ENCODE measurements at regions of chr11 and their contacts with region 1.

Region 1: GRCh38 chr11:81707881-81708280 is 1025.8 kb downstream of the FAM181B start:
- DNase-seq: no peak
- H3K4me3 ChIP-seq: no peak overlapping the region
- H3K27ac ChIP-seq: no peak overlapping the region
- H3K4me1 ChIP-seq: no peaks in the 10 kb centered on the region
- H3K27me3 ChIP-seq: no peaks in the 10 kb centered on the region
- CTCF ChIP-seq: peak; percentile 46 to 76 (median 69)
- EP300 ChIP-seq: no peak
- POLR2A ChIP-seq: no peak
- RAD21 ChIP-seq: peak; percentile 78 to 79

Region 2: DNA sequence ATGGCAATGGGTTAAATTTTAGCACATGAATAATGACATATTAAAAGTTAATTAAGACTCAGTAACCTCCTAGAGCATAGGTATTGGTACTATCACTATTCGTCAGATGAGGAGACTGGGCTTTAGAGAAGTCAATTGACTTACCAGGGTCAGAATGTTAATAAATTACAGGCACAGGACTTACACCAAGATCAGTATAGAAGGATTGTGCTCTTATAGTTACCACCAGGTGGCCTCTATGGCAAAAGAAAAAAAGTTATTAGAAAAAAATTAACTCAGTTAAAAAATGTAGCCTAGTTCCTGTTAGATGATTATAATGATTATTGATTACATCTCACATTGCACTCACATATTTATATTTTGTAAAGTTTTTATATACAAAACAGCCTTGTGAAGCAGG is 137.9 kb before region 1 on chr11:
- CTCF ChIA-PET with region 1: no interaction called
- POLR2A ChIA-PET with region 1: no interaction called
- DNase-seq: no peak
- H3K4me3 ChIP-seq: no peak overlapping the region
- H3K27ac ChIP-seq: no peak overlapping the region
- H3K4me1 ChIP-seq: no peaks in the 10 kb centered on the region
- H3K27me3 ChIP-seq: no peaks in the 10 kb centered on the region
- CTCF ChIP-seq: no peak
- EP300 ChIP-seq: no peak
- POLR2A ChIP-seq: no peak
- RAD21 ChIP-seq: no peak

Region 3: DNA sequence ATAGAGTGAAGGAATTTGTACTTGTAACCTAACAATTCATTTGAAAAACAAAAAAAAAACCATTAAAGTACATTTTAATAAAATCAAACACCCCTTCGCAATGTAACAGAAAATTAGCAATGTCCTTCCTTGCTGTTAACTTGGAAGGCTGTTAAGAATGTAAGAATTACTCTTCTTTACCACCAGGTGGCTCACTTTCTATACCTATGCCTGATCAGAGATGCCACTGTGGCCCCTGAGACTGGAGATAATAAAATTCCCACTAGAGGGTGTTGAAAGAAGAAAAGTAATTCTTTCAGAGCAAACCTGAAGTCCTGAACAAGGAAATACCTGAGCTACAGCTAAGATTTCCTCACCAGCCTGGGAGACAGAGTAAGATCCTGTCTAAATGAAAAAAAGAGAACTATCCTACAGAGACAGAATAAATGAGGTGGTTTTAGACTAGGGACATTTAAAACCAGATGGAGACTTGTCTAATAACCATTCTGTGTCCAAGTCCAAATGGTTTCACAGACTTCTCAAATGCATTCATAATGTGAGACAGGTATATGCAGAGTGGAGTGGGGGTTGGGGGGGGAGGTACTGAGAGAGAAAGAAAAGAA is 63.5 kb before region 1 on chr11:
- CTCF ChIA-PET with region 1: interaction called, 17 read pairs
- POLR2A ChIA-PET with region 1: no interaction called
- DNase-seq: no peak
- H3K4me3 ChIP-seq: no peak overlapping the region
- H3K27ac ChIP-seq: no peak overlapping the region
- H3K4me1 ChIP-seq: peaks cover 0 to 9% (median 5%) of the 10 kb centered on the region in 4 experiments; a peak in 6 of 7 replicates
- H3K27me3 ChIP-seq: peaks cover 5 to 32% (median 21%) of the 10 kb centered on the region in 4 experiments
- CTCF ChIP-seq: peak in 2 of 3 experiments; percentile 74 to 95; a peak in 3 of 4 replicates
- EP300 ChIP-seq: no peak
- POLR2A ChIP-seq: no peak
- RAD21 ChIP-seq: peak; percentile 79 to 81

Region 4: GRCh38 chr11:81963018-81963417 is 255.1 kb after region 1 on chr11:
- CTCF ChIA-PET with region 1: interaction called, 11 read pairs
- POLR2A ChIA-PET with region 1: no interaction called
- DNase-seq: no peak
- H3K4me3 ChIP-seq: no peak overlapping the region
- H3K27ac ChIP-seq: no peak overlapping the region
- H3K4me1 ChIP-seq: no peaks in the 10 kb centered on the region
- H3K27me3 ChIP-seq: no peaks in the 10 kb centered on the region
- CTCF ChIP-seq: peak in 1 of 3 experiments; percentile 35; a peak in 1 of 4 replicates
- EP300 ChIP-seq: no peak
- POLR2A ChIP-seq: no peak
- RAD21 ChIP-seq: peak in 1 of 2 experiments; percentile 24; a peak in 1 of 4 replicates

Region 5: GRCh38 chr11:81979448-81979847 is 271.6 kb after region 1 on chr11:
- CTCF ChIA-PET with region 1: no interaction called
- POLR2A ChIA-PET with region 1: no interaction called
- DNase-seq: no peak
- H3K4me3 ChIP-seq: no peak overlapping the region
- H3K27ac ChIP-seq: no peak overlapping the region
- H3K4me1 ChIP-seq: no peaks in the 10 kb centered on the region
- H3K27me3 ChIP-seq: no peaks in the 10 kb centered on the region
- CTCF ChIP-seq: no peak
- EP300 ChIP-seq: no peak
- POLR2A ChIP-seq: no peak
- RAD21 ChIP-seq: no peak

Region 6: GRCh38 chr11:82229341-82229740 is 521.5 kb after region 1 on chr11:
- CTCF ChIA-PET with region 1: interaction called, 25 read pairs
- POLR2A ChIA-PET with region 1: no interaction called
- DNase-seq: no peak
- H3K4me3 ChIP-seq: no peak overlapping the region
- H3K27ac ChIP-seq: no peak overlapping the region
- H3K4me1 ChIP-seq: no peaks in the 10 kb centered on the region
- H3K27me3 ChIP-seq: no peaks in the 10 kb centered on the region
- CTCF ChIP-seq: peak in 2 of 3 experiments; percentile 38 to 40; a peak in 2 of 4 replicates
- EP300 ChIP-seq: no peak
- POLR2A ChIP-seq: no peak
- RAD21 ChIP-seq: peak; percentile 60 to 73

Measured in H1 (cell line).